ENCODE measurements at regions of chr6 and their contacts with region 1.

Region 1: GRCh38 chr6:28090917-28091586 is 10.7 kb downstream of the ZNF165 start:
- DNase-seq: no peak
- H3K4me3 ChIP-seq: no peak overlapping the region
- H3K4me3 Mint-ChIP-seq: peak overlapping the region in 2 of 7 donors; percentile 33 to 57
- H3K27ac ChIP-seq: no peak overlapping the region
- H3K27ac Mint-ChIP-seq: peak overlapping the region in 1 of 8 donors; percentile 21
- H3K4me1 ChIP-seq: no peaks in the 10 kb centered on the region
- H3K4me1 Mint-ChIP-seq: no peaks in the 10 kb centered on the region
- H3K27me3 ChIP-seq: no peaks in the 10 kb centered on the region
- H3K27me3 Mint-ChIP-seq: peaks cover 8 to 10% of the 10 kb centered on the region in 2 donors

Region 2: DNA sequence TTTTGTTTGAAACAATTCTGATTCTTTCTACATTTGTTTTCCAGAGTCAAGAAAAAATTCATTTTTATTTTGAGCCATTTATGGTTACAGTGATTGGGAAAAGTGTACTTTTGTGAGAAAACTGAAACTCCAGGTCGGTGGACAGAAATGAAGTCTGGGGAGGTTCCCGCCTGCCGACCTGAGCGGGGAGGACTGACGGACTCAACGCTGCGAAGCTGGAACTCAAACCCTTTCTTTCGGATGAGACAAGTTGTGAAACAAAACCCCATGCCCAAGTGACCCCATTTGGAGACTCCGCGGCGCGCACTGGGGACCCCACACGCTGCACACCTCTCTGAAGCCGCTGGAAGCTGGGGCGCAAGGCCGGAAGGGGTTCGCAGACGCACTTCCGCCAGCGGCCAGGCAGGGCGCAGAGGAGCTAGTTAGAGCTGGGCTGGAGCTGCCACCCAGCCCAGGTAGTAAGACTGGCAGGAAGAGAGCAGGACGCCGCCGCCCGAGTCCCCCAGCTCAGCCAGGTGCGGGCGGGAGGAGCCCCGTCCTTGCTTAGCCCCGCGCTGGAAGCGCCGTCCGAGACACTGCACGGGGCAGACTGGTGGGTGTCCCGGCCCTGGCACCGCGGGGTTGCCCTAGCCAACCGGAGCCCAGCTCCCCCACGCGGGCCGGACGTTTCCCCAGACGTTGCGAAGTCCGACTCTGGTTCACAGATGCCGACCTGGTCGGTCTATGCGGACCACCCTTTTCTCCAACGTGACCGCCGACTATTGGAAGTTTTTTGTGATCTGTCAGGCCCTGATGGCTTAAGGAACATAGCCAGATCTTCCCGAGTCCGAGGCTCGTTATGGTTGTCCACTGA is 13.6 kb after region 1 on chr6:
- CTCF ChIA-PET with region 1: interaction called, 12 read pairs
- POLR2A ChIA-PET with region 1: no interaction called
- DNase-seq: peak; percentile 77 to 89 (median 81)
- H3K4me3 ChIP-seq: peak overlapping the region; percentile 64
- H3K4me3 Mint-ChIP-seq: peak overlapping the region; percentile 91 to 94 (median 93)
- H3K27ac ChIP-seq: peak overlapping the region; percentile 78
- H3K27ac Mint-ChIP-seq: peak overlapping the region; percentile 81 to 97 (median 95)
- H3K4me1 ChIP-seq: no peaks in the 10 kb centered on the region
- H3K4me1 Mint-ChIP-seq: peaks cover 11 to 15% (median 11%) of the 10 kb centered on the region in 3 donors
- H3K27me3 ChIP-seq: no peaks in the 10 kb centered on the region
- H3K27me3 Mint-ChIP-seq: peaks cover 14 to 16% of the 10 kb centered on the region in 2 donors

Region 3: GRCh38 chr6:28136585-28137504 is 45.8 kb after region 1 on chr6:
- CTCF ChIA-PET with region 1: no interaction called
- POLR2A ChIA-PET with region 1: no interaction called
- DNase-seq: peak; percentile 59 to 83 (median 67)
- H3K4me3 ChIP-seq: peak overlapping the region; percentile 91
- H3K4me3 Mint-ChIP-seq: peak overlapping the region; percentile 91 to 99 (median 97)
- H3K27ac ChIP-seq: peak overlapping the region; percentile 91
- H3K27ac Mint-ChIP-seq: peak overlapping the region; percentile 97 to 100 (median 99)
- H3K4me1 ChIP-seq: peaks cover 32% of the 10 kb centered on the region
- H3K4me1 Mint-ChIP-seq: peaks cover 62 to 81% (median 74%) of the 10 kb centered on the region in 3 donors
- H3K27me3 ChIP-seq: no peaks in the 10 kb centered on the region
- H3K27me3 Mint-ChIP-seq: no peaks in the 10 kb centered on the region

Measured in CD8-positive, alpha-beta memory T cell (primary cell).